ENCODE measurements at regions of chr7 and their contacts with region 1.

Region 1: GRCh38 chr7:80918909-80919662 is at the start of gene SEMA3C:
- DNase-seq: peak; percentile 84 to 90
- ATAC-seq: peak; percentile 96 to 100 (median 98)
- H3K4me3 ChIP-seq: peak within 1 kb of the TSS; percentile 12 to 76 (median 63)
- H3K27ac ChIP-seq: peak within 1 kb of the TSS; percentile 17 to 84 (median 76)
- H3K4me1 ChIP-seq: peaks cover 0 to 16% (median 5%) of the 10 kb centered on the region in 9 donors
- H3K27me3 ChIP-seq: peaks cover 0 to 11% (median 0%) of the 10 kb centered on the region in 7 donors
- CTCF ChIP-seq: peak in 1 of 9 donors; percentile 20
- total RNA-seq, gene SEMA3C: 41.4 to 83.2 (median 63.0) TPM

Region 2: DNA sequence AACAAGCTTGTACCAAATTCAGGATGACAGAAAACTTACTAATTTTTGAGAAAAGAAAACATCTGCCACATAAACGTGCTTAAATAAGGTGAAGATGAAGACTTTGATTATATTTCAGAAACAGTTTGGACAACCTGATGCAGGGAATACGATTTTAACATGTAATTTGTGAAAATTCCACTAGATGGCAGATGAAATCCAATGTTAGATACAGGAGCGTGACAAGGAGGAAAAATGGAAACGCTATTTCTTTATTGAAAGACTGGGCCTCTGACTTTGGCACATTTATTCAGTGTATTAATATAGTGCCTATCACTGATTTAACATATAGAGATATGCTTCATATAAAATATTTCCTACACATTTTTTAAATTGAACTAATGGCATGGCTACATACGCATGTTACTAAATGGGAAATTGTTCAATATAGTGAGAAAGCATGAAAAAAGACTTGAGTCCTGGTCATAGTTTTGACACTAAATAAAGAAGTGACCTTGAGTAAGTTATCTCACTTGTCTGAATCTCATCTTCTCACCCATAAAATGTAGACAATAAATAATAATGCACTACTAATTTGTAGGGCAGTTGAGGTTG is 219.9 kb before region 1 on chr7:
- intact Hi-C with region 1: loop called in 6 of 10 experiments (anchors 2 to 10 kb)
- DNase-seq: no peak
- ATAC-seq: peak in 7 of 8 donors; percentile 47 to 80 (median 73)
- H3K4me3 ChIP-seq: no peak overlapping the region
- H3K27ac ChIP-seq: no peak overlapping the region
- H3K4me1 ChIP-seq: peaks cover 0 to 11% (median 5%) of the 10 kb centered on the region in 9 donors
- H3K27me3 ChIP-seq: no peaks in the 10 kb centered on the region
- CTCF ChIP-seq: peak; percentile 50 to 84 (median 71)

Region 3: DNA sequence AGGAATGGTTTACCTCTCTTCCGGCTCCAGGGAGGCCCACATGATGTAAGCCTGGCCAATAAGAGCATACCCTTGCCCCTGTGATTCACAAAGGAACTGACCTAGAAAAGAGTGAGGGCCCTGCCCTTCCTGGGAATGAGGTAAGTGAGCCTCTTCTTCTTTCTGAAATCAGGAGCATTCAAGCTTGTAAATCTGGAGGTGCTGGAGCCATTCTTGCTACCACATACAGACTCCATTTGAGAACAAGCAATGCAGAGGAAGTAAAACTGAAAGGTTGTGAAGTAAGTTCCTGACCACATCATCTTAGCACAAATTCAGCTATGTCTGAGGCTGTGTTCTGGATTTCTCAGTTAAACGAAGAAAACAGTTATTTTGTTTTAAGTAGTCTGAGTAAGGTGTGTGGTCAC is 148.4 kb before region 1 on chr7:
- intact Hi-C with region 1: no loop called
- DNase-seq: no peak
- ATAC-seq: no peak
- H3K4me3 ChIP-seq: no peak overlapping the region
- H3K27ac ChIP-seq: peak overlapping the region in 1 of 10 donors; percentile 76
- H3K4me1 ChIP-seq: peaks cover 7 to 46% (median 24%) of the 10 kb centered on the region in 9 donors
- H3K27me3 ChIP-seq: no peaks in the 10 kb centered on the region
- CTCF ChIP-seq: no peak

Region 4: GRCh38 chr7:80781561-80781979 is 137.5 kb before region 1 on chr7:
- intact Hi-C with region 1: loop called in 4 of 10 experiments (anchors 10 kb)
- DNase-seq: peak; percentile 23 to 42
- ATAC-seq: peak; percentile 62 to 93 (median 87)
- H3K4me3 ChIP-seq: no peak overlapping the region
- H3K27ac ChIP-seq: peak overlapping the region; percentile 13 to 77 (median 57)
- H3K4me1 ChIP-seq: peaks cover 4 to 36% (median 25%) of the 10 kb centered on the region in 9 donors
- H3K27me3 ChIP-seq: no peaks in the 10 kb centered on the region
- CTCF ChIP-seq: no peak

Region 5: DNA sequence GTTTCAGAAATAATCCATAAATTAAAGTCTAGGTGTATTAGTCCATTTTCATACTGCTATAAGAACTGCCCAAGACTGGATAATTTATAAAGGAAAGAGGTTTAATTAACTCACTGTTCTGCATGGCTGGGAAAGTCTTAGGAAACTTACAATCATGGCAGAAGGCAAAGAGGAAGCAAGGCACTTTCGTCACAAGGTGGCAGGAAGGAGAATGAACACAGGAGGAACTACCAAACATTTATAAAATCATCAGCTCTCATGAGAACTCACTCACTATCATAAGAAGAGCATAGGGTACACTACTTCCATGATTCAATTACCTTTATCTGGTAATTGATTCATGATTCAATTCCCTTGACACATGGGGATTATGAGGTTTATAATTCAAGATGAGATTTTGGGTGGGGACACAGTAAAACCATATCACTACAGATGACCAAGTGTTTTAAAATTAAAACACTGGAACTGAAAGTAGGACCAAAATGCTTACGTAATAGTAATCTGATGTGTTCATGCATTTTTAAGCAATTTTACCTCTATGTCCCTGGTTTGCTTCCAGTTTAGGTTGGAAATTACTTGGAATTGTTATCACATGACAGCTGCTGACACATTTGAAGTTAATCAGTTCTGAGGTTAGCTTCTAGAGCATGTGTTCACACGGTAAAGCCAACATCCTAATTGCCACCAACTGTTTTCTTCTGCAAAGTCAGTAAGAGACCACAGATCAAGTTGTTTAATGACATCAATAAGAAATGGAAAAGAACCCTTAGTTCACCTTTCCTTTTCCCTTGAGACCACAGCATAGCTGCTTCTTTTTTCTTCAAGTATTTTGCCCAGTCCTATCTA is 48.2 kb after region 1 on chr7:
- intact Hi-C with region 1: no loop called
- DNase-seq: no peak
- ATAC-seq: no peak
- H3K4me3 ChIP-seq: no peak overlapping the region
- H3K27ac ChIP-seq: no peak overlapping the region
- H3K4me1 ChIP-seq: no peaks in the 10 kb centered on the region
- H3K27me3 ChIP-seq: no peaks in the 10 kb centered on the region
- CTCF ChIP-seq: no peak

Region 6: GRCh38 chr7:81186691-81187090 is 267.6 kb after region 1 on chr7:
- intact Hi-C with region 1: loop called in 1 of 10 experiments (anchors 5 kb)
- DNase-seq: no peak
- ATAC-seq: peak in 3 of 8 donors; percentile 37 to 71 (median 38)
- H3K4me3 ChIP-seq: no peak overlapping the region
- H3K27ac ChIP-seq: no peak overlapping the region
- H3K4me1 ChIP-seq: peaks cover 0 to 23% (median 5%) of the 10 kb centered on the region in 9 donors
- H3K27me3 ChIP-seq: no peaks in the 10 kb centered on the region
- CTCF ChIP-seq: no peak

Region 7: GRCh38 chr7:81267508-81267907 is 348.4 kb after region 1 on chr7:
- intact Hi-C with region 1: loop called in 1 of 10 experiments (anchors 10 kb)
- DNase-seq: no peak
- ATAC-seq: no peak
- H3K4me3 ChIP-seq: no peak overlapping the region
- H3K27ac ChIP-seq: no peak overlapping the region
- H3K4me1 ChIP-seq: no peaks in the 10 kb centered on the region
- H3K27me3 ChIP-seq: no peaks in the 10 kb centered on the region
- CTCF ChIP-seq: no peak

Region 8: GRCh38 chr7:81410471-81411125 is 491.5 kb after region 1 on chr7:
- intact Hi-C with region 1: no loop called
- DNase-seq: no peak
- ATAC-seq: no peak
- H3K4me3 ChIP-seq: no peak overlapping the region
- H3K27ac ChIP-seq: no peak overlapping the region
- H3K4me1 ChIP-seq: no peaks in the 10 kb centered on the region
- H3K27me3 ChIP-seq: no peaks in the 10 kb centered on the region
- CTCF ChIP-seq: no peak

Region 9: DNA sequence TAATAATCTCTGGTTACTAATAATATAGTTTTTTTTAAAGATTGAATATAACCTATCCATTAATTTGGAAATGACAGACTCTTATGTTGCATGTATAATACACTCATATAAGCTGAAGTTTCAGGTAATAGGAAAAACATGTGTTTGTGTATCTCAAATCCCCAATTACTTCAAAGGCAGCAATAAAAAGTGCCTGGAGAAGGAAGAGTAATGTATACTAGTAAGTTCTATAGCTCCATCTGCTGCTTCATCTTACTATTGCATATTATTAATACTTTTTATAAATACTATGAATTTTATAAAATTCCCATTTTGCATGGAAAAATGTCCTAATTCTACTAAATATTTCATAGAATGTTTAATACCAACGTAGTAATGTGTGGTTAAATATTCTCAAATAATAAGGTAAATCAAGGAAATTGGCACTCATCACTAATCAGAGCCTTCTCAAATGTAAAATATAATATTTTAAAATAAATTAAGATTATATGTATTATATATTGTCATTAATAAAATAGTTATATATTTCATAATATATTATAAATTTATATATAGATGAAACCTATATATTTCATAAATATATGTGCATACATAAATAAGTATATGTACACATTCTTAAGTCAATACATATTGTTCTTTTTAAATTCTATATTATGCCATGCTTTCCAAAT is 538.9 kb after region 1 on chr7:
- intact Hi-C with region 1: loop called in 5 of 10 experiments (anchors 10 kb)
- DNase-seq: no peak
- ATAC-seq: no peak
- H3K4me3 ChIP-seq: no peak overlapping the region
- H3K27ac ChIP-seq: no peak overlapping the region
- H3K4me1 ChIP-seq: no peaks in the 10 kb centered on the region
- H3K27me3 ChIP-seq: no peaks in the 10 kb centered on the region
- CTCF ChIP-seq: peak in 7 of 9 donors; percentile 19 to 53 (median 38)